HCT116 (cell line): ENCODE measurements at regions of chrX and their contacts with region 1.

Region 1: DNA sequence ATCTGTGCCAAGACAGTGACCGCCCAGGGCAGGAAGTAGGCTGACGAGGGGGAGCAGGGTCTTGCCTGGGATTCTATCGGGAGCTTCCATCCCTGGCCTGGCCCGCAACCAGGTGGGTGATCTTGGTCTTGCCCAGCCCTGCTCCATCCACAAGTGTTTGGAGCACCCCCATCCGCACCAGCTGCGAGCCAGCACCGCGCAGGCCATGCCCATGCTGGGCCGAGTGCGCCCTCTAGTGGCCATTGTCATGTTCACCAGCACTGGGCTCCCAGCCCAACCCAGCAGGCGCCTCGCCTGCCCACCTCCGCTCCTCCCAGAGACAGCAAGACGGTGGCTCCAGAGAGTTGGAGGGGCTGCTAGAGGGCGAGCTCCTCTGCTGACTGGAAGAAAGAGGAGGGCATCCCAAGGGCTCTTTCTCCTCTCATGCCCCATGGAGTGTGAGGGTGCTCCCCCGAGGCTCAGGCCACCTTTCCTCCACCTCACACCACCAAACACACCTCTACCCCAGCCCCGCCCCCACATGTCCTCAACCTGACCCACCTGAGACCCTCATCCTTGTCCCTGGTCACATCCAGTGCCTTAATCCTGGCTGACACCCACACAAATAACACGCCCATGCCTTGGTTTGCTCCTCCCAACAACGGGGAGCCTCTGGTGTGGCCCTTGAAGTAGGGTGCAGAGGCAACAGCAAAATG is 9.8 kb upstream of the ATP2B3 start:
- DNase-seq: peak; percentile 26
- ATAC-seq: peak; percentile 98
- H3K4me3 ChIP-seq: no peak overlapping the region
- H3K27ac ChIP-seq: no peak overlapping the region; the same call in 1 of the 2 replicates
- H3K4me1 ChIP-seq: peaks cover 0 to 5% of the 10 kb centered on the region in 2 experiments; a peak in 1 of 4 replicates
- H3K27me3 ChIP-seq: no peaks in the 10 kb centered on the region
- CTCF ChIP-seq: peak in 2 of 3 experiments; percentile 69 to 71; a peak in 4 of 6 replicates
- POLR2A ChIP-seq: no peak
- RAD21 ChIP-seq: no peak

Region 2: GRCh38 chrX:153032397-153033118 is 475.1 kb before region 1 on chrX:
- CTCF ChIA-PET with region 1: interaction called, 7 read pairs
- POLR2A ChIA-PET with region 1: no interaction called
- RAD21 ChIA-PET with region 1: no interaction called
- intact Hi-C with region 1: loop called (anchors 10 kb)
- DNase-seq: peak; percentile 21
- ATAC-seq: peak; percentile 90
- H3K4me3 ChIP-seq: peak overlapping the region in 1 of 2 experiments; percentile 26; a peak in 1 of 4 replicates
- H3K27ac ChIP-seq: no peak overlapping the region
- H3K4me1 ChIP-seq: peaks cover 0 to 4% of the 10 kb centered on the region in 2 experiments; a peak in 1 of 4 replicates
- H3K27me3 ChIP-seq: no peaks in the 10 kb centered on the region
- CTCF ChIP-seq: peak; percentile 64 to 69 (median 66)
- POLR2A ChIP-seq: no peak
- RAD21 ChIP-seq: peak; percentile 95

Region 3: GRCh38 chrX:153460845-153461244 is 46.8 kb before region 1 on chrX:
- CTCF ChIA-PET with region 1: interaction called, 15 read pairs
- POLR2A ChIA-PET with region 1: no interaction called
- RAD21 ChIA-PET with region 1: no interaction called
- intact Hi-C with region 1: loop called (anchors 1 kb)
- DNase-seq: no peak
- ATAC-seq: peak; percentile 89
- H3K4me3 ChIP-seq: no peak overlapping the region
- H3K27ac ChIP-seq: no peak overlapping the region
- H3K4me1 ChIP-seq: no peaks in the 10 kb centered on the region
- H3K27me3 ChIP-seq: no peaks in the 10 kb centered on the region
- CTCF ChIP-seq: peak; percentile 30 to 63 (median 63); a peak in 5 of 6 replicates
- POLR2A ChIP-seq: no peak
- RAD21 ChIP-seq: no peak; the same call in 1 of the 2 replicates

Region 4: DNA sequence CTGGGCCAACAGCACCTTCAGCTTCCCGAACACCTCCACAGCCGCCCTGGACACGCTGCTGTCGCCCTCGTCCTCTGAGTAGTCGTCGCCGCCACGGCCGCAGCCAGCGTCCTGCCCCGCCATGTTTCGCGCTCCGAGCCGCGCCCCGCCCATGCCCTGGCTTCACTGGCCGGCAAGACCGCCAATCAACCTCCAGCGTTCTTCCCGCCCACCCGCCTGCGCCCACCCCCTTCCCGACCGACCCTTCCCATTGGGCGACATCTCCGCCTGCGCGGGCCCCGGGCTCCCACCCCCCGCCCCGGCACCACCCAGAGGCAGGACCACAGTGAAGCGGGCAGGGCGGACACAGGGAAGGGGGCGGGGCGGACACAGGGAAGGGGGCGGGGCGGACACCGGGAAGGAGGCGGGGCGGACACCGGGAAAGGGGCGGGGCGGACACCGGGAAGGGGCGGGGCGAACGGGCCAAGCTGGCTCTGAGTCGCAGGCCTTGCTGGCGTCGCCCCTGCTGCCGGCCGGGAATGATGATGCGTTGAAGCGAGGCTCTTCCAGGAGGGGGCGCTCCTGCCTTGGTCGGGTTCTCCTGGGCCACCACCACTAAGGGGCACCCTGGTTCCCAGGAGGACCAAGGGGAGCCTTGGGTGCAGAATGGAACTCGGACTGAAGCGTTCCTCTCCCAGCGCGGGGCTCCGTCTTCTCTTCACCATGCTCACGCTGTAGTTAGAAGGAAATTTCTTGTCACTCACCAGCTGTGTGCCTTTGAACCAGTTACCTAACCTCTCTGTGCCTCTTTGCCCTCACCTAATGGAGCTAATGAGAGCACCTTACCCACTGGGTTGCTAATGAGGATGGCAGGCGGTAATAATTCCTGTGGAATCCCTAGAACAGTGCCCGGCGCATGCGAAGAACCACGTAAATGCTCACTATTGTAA is 36.9 kb before region 1 on chrX and contains the start of gene HAUS7:
- CTCF ChIA-PET with region 1: interaction called, 7 read pairs
- POLR2A ChIA-PET with region 1: no interaction called
- RAD21 ChIA-PET with region 1: interaction called in 1 of 2 experiments, 12 read pairs
- intact Hi-C with region 1: no loop called
- DNase-seq: peak; percentile 59
- ATAC-seq: peak; percentile 91
- H3K4me3 ChIP-seq: peak within 1 kb of the TSS; percentile 73 to 78
- H3K27ac ChIP-seq: peak within 1 kb of the TSS; percentile 35; the same call in 1 of the 2 replicates
- H3K4me1 ChIP-seq: peaks cover 0 to 5% of the 10 kb centered on the region in 2 experiments; a peak in 1 of 4 replicates
- H3K27me3 ChIP-seq: no peaks in the 10 kb centered on the region
- CTCF ChIP-seq: peak in 2 of 3 experiments; percentile 64 to 66; a peak in 4 of 6 replicates
- POLR2A ChIP-seq: no peak
- RAD21 ChIP-seq: no peak
- total RNA-seq, gene HAUS7: 28.9 TPM

Region 5: GRCh38 chrX:153582896-153583295 is 75.3 kb after region 1 on chrX:
- CTCF ChIA-PET with region 1: no interaction called
- POLR2A ChIA-PET with region 1: no interaction called
- RAD21 ChIA-PET with region 1: no interaction called
- intact Hi-C with region 1: no loop called
- DNase-seq: no peak
- ATAC-seq: no peak
- H3K4me3 ChIP-seq: no peak overlapping the region
- H3K27ac ChIP-seq: no peak overlapping the region
- H3K4me1 ChIP-seq: no peaks in the 10 kb centered on the region
- H3K27me3 ChIP-seq: no peaks in the 10 kb centered on the region
- CTCF ChIP-seq: no peak
- POLR2A ChIP-seq: no peak
- RAD21 ChIP-seq: no peak

Region 6: GRCh38 chrX:153845842-153846241 is 338.2 kb after region 1 on chrX:
- CTCF ChIA-PET with region 1: no interaction called
- POLR2A ChIA-PET with region 1: no interaction called
- RAD21 ChIA-PET with region 1: no interaction called
- intact Hi-C with region 1: no loop called
- DNase-seq: no peak
- ATAC-seq: no peak
- H3K4me3 ChIP-seq: no peak overlapping the region
- H3K27ac ChIP-seq: no peak overlapping the region
- H3K4me1 ChIP-seq: no peaks in the 10 kb centered on the region
- H3K27me3 ChIP-seq: no peaks in the 10 kb centered on the region
- CTCF ChIP-seq: no peak
- POLR2A ChIP-seq: no peak
- RAD21 ChIP-seq: no peak